ENCODE measurements at regions of chr4 and their contacts with region 1.

Region 1: GRCh38 chr4:68831642-68832041 is 15.8 kb downstream of the UGT2B10 start:
- DNase-seq: no peak
- ATAC-seq: no peak
- H3K4me3 ChIP-seq: no peak overlapping the region
- H3K4me3 Mint-ChIP-seq: no peak overlapping the region
- H3K27ac ChIP-seq: no peak overlapping the region
- H3K27ac Mint-ChIP-seq: no peak overlapping the region
- H3K4me1 ChIP-seq: no peaks in the 10 kb centered on the region
- H3K4me1 Mint-ChIP-seq: no peaks in the 10 kb centered on the region
- H3K27me3 ChIP-seq: no peaks in the 10 kb centered on the region
- H3K27me3 Mint-ChIP-seq: peaks cover 5% of the 10 kb centered on the region
- CTCF ChIP-seq: no peak

Region 2: DNA sequence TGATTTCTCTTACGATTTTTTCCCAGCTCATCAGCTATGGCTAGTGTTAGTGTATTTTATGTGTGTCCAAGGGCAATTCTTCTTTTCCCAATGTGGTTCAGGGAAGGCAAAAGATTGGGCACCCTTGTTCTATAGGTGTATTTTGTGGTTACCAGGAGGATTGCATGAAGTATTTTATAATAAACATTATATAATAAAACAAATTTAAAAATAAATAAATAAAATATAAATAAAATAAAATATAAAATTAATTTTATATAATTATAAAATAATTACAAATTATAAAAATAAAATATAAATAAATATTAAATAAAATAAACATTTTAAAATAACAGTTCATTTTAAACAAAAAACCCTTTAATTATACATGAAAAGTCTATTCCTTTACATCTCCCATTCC is 51.4 kb before region 1 on chr4:
- CTCF ChIA-PET with region 1: no interaction called
- POLR2A ChIA-PET with region 1: no interaction called
- intact Hi-C with region 1: loop called in 1 of 2 experiments (anchors 5 kb)
- DNase-seq: no peak
- ATAC-seq: no peak
- H3K4me3 ChIP-seq: no peak overlapping the region
- H3K4me3 Mint-ChIP-seq: no peak overlapping the region
- H3K27ac ChIP-seq: no peak overlapping the region
- H3K27ac Mint-ChIP-seq: no peak overlapping the region
- H3K4me1 ChIP-seq: no peaks in the 10 kb centered on the region
- H3K4me1 Mint-ChIP-seq: no peaks in the 10 kb centered on the region
- H3K27me3 ChIP-seq: no peaks in the 10 kb centered on the region
- H3K27me3 Mint-ChIP-seq: peaks cover 4% of the 10 kb centered on the region
- CTCF ChIP-seq: no peak

Region 3: DNA sequence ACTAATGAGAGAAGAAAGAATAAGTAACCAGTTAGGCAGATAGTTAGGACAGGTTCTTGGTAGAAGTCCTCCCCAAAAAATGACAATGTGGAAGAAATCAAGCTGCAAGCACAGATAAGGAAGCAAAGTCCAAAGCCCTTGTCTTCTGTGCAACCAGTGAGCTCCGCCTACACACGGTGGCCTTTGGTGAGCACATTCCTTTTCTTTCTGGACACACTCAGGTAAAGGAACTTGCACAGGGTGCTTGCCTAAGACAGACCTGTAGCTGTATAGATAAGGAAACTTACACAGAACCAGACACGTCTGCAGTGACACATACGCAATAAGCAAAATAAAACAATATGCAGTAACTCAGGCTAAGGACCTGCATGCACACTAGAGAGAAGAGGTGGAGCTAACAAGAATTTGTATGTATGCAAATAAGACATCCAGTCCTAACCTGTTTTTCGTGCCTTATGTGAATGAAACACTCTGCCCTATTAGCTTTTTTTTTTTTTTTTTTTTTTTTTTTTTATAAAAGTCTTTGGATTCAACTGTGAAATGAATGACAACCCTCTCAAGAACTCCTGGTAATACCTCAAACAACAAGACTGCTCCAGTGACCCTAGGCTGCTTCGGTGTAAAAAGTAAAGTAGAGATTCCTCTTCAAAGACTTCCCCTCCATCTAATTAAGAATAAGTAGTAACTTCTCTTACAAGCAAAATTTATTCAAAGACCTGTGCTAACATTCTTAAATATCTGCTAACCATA is 33.0 kb after region 1 on chr4:
- CTCF ChIA-PET with region 1: no interaction called
- POLR2A ChIA-PET with region 1: no interaction called
- intact Hi-C with region 1: no loop called
- DNase-seq: no peak
- ATAC-seq: no peak
- H3K4me3 ChIP-seq: no peak overlapping the region
- H3K4me3 Mint-ChIP-seq: no peak overlapping the region
- H3K27ac ChIP-seq: no peak overlapping the region
- H3K27ac Mint-ChIP-seq: no peak overlapping the region
- H3K4me1 ChIP-seq: no peaks in the 10 kb centered on the region
- H3K4me1 Mint-ChIP-seq: no peaks in the 10 kb centered on the region
- H3K27me3 ChIP-seq: no peaks in the 10 kb centered on the region
- H3K27me3 Mint-ChIP-seq: no peaks in the 10 kb centered on the region
- CTCF ChIP-seq: no peak

Measured in CD4-positive, alpha-beta T cell (primary cell).